GM12878 (cell line): ENCODE measurements at regions of chr9 and their contacts with region 1.

Region 1: GRCh38 chr9:130042833-130043653 is at the start of gene FNBP1:
- DNase-seq: no peak
- ATAC-seq: peak; percentile 53
- H3K4me3 ChIP-seq: peak within 1 kb of the TSS; percentile 95
- H3K27ac ChIP-seq: peak within 1 kb of the TSS; percentile 83
- H3K4me1 ChIP-seq: peaks cover 24% of the 10 kb centered on the region
- H3K27me3 ChIP-seq: no peaks in the 10 kb centered on the region
- CTCF ChIP-seq: no peak
- EP300 ChIP-seq: no peak
- POLR2A ChIP-seq: peak; percentile 92
- RAD21 ChIP-seq: no peak
- polyA plus RNA-seq, gene FNBP1: 64.5 to 80.5 TPM

Region 2: GRCh38 chr9:129932303-129933151 is 110.5 kb before region 1 on chr9:
- CTCF ChIA-PET with region 1: no interaction called
- POLR2A ChIA-PET with region 1: interaction called, 5 read pairs
- RAD21 ChIA-PET with region 1: interaction called, 23 read pairs
- SMC1A ChIA-PET with region 1: interaction called, 8 read pairs
- in situ Hi-C with region 1: no loop called
- intact Hi-C with region 1: no loop called
- DNase-seq: peak; percentile 47
- ATAC-seq: peak; percentile 52
- H3K4me3 ChIP-seq: no peak overlapping the region
- H3K27ac ChIP-seq: peak overlapping the region; percentile 84
- H3K4me1 ChIP-seq: peaks cover 46% of the 10 kb centered on the region
- H3K27me3 ChIP-seq: no peaks in the 10 kb centered on the region
- CTCF ChIP-seq: no peak
- EP300 ChIP-seq: 0 out of 4 replicates have a peak, but pooled peaks of 1 of the 2 experiments have one; percentile 18
- POLR2A ChIP-seq: no peak
- RAD21 ChIP-seq: no peak

Region 3: GRCh38 chr9:129988607-129989361 is 54.3 kb before region 1 on chr9:
- CTCF ChIA-PET with region 1: interaction called, 5 read pairs
- POLR2A ChIA-PET with region 1: interaction called, 247 read pairs
- RAD21 ChIA-PET with region 1: interaction called, 254 read pairs
- SMC1A ChIA-PET with region 1: interaction called, 763 read pairs
- in situ Hi-C with region 1: no loop called
- intact Hi-C with region 1: loop called (anchors 2 kb)
- DNase-seq: peak; percentile 99
- ATAC-seq: peak; percentile 65
- H3K4me3 ChIP-seq: peak overlapping the region; percentile 33
- H3K27ac ChIP-seq: peak overlapping the region; percentile 100
- H3K4me1 ChIP-seq: peaks cover 62% of the 10 kb centered on the region
- H3K27me3 ChIP-seq: no peaks in the 10 kb centered on the region
- CTCF ChIP-seq: no peak
- EP300 ChIP-seq: peak; percentile 74 to 96; a peak in 3 of 4 replicates
- POLR2A ChIP-seq: peak; percentile 70
- RAD21 ChIP-seq: peak; percentile 8; the same call in 1 of the 2 replicates

Region 4: DNA sequence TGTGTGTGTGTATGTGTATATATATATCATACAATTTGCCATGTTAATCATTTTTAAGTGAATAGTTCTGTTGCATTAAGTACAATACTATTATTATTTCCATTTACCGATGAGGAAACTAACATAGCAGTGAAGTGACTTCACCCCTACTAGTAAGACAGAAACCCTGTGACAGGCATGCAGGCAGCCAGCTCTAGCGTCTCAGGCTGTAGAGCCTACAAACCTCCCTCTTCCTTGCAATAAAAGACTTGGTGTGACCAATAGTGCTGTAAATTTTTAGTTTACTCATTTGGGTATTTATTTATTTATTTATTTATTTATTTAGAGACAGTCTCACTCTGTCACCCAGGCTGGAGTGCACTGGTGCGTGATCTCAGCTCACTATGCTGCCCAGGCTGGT is 24.8 kb before region 1 on chr9:
- CTCF ChIA-PET with region 1: interaction called, 4 read pairs
- POLR2A ChIA-PET with region 1: interaction called, 220 read pairs
- RAD21 ChIA-PET with region 1: interaction called, 160 read pairs
- SMC1A ChIA-PET with region 1: interaction called, 73 read pairs
- in situ Hi-C with region 1: no loop called
- intact Hi-C with region 1: no loop called
- DNase-seq: no peak
- ATAC-seq: peak; percentile 26
- H3K4me3 ChIP-seq: no peak overlapping the region
- H3K27ac ChIP-seq: peak overlapping the region; percentile 83
- H3K4me1 ChIP-seq: peaks cover 88% of the 10 kb centered on the region
- H3K27me3 ChIP-seq: no peaks in the 10 kb centered on the region
- CTCF ChIP-seq: no peak
- EP300 ChIP-seq: no peak
- POLR2A ChIP-seq: no peak
- RAD21 ChIP-seq: no peak

Region 5: GRCh38 chr9:130029223-130029973 is 13.6 kb before region 1 on chr9:
- CTCF ChIA-PET with region 1: interaction called, 20 read pairs
- POLR2A ChIA-PET with region 1: interaction called, 220 read pairs
- RAD21 ChIA-PET with region 1: interaction called, 160 read pairs
- SMC1A ChIA-PET with region 1: interaction called, 42 read pairs
- in situ Hi-C with region 1: no loop called
- intact Hi-C with region 1: no loop called
- DNase-seq: no peak
- ATAC-seq: peak; percentile 12
- H3K4me3 ChIP-seq: peak overlapping the region; percentile 46
- H3K27ac ChIP-seq: peak overlapping the region; percentile 83
- H3K4me1 ChIP-seq: peaks cover 85% of the 10 kb centered on the region
- H3K27me3 ChIP-seq: no peaks in the 10 kb centered on the region
- CTCF ChIP-seq: no peak
- EP300 ChIP-seq: peak; percentile 42 to 45; a peak in 2 of 4 replicates
- POLR2A ChIP-seq: no peak
- RAD21 ChIP-seq: no peak

Region 6: GRCh38 chr9:130069048-130069447 is 26.0 kb after region 1 on chr9:
- CTCF ChIA-PET with region 1: no interaction called
- POLR2A ChIA-PET with region 1: interaction called, 11 read pairs
- RAD21 ChIA-PET with region 1: interaction called, 5 read pairs
- SMC1A ChIA-PET with region 1: interaction called, 6 read pairs
- in situ Hi-C with region 1: no loop called
- intact Hi-C with region 1: no loop called
- DNase-seq: no peak
- ATAC-seq: no peak
- H3K4me3 ChIP-seq: no peak overlapping the region
- H3K27ac ChIP-seq: peak overlapping the region; percentile 20; the same call in 1 of the 2 replicates
- H3K4me1 ChIP-seq: peaks cover 18% of the 10 kb centered on the region
- H3K27me3 ChIP-seq: no peaks in the 10 kb centered on the region
- CTCF ChIP-seq: no peak
- EP300 ChIP-seq: no peak
- POLR2A ChIP-seq: no peak
- RAD21 ChIP-seq: no peak

Region 7: DNA sequence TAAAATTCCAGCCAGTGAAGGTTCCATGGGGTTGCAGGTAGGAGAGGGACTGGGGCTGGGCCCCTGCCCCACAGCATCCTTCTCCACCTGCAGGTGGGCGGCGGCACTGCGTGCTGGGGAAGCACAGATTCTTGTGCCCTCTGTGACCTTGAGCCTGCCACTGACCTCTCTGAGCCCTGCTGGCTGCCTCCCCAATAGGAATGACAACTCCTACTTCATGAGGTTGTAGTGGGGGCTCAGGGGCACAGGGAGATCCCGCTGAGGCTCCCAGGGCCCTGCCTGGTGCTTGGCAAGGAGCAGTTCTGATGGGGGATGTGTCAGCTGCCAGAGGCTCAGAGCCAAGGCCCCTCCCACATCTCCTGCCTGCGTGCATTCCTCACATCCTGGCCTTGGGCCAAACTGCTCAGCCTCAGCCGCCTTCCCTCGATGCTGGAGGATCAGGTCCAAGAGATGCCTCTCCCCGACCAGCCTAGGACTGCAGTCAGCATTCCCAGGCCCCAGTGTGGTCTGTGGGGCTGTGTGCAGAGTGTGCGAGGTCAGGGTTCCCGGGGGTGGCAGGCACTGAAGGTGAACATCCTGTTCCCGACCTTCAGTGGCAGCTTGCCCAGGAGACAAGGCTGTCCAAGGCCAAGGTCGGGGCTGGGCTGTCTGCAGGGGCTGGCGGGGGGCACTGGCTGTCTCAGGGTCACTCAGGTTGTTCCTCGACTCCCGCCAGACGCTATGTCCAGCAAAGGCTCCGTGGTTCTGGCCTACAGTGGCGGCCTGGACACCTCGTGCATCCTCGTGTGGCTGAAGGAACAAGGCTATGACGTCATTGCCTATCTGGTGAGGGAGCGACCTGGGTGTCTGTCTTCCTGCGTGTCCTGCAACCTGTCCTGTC is 408.7 kb after region 1 on chr9:
- CTCF ChIA-PET with region 1: no interaction called
- POLR2A ChIA-PET with region 1: no interaction called
- RAD21 ChIA-PET with region 1: no interaction called
- SMC1A ChIA-PET with region 1: no interaction called
- in situ Hi-C with region 1: no loop called
- intact Hi-C with region 1: no loop called
- DNase-seq: no peak
- ATAC-seq: peak; percentile 52
- H3K4me3 ChIP-seq: no peak overlapping the region
- H3K27ac ChIP-seq: no peak overlapping the region
- H3K4me1 ChIP-seq: no peaks in the 10 kb centered on the region
- H3K27me3 ChIP-seq: no peaks in the 10 kb centered on the region
- CTCF ChIP-seq: peak; percentile 8 to 44 (median 29); a peak in 1 of 6 replicates
- EP300 ChIP-seq: no peak
- POLR2A ChIP-seq: no peak
- RAD21 ChIP-seq: no peak

Region 8: GRCh38 chr9:131709771-131710454 is 1666.9 kb after region 1 on chr9:
- CTCF ChIA-PET with region 1: no interaction called
- POLR2A ChIA-PET with region 1: no interaction called
- RAD21 ChIA-PET with region 1: no interaction called
- SMC1A ChIA-PET with region 1: no interaction called
- in situ Hi-C with region 1: loop called (anchors 25 kb)
- intact Hi-C with region 1: no loop called
- DNase-seq: peak; percentile 77
- ATAC-seq: peak; percentile 76
- H3K4me3 ChIP-seq: peak overlapping the region; percentile 57
- H3K27ac ChIP-seq: peak overlapping the region; percentile 83
- H3K4me1 ChIP-seq: peaks cover 60% of the 10 kb centered on the region
- H3K27me3 ChIP-seq: no peaks in the 10 kb centered on the region
- CTCF ChIP-seq: 0 out of 6 replicates have a peak, but pooled peaks of 1 of the 3 experiments have one; percentile 8
- EP300 ChIP-seq: peak in 1 of 2 experiments; percentile 82; a peak in 3 of 4 replicates
- POLR2A ChIP-seq: no peak
- RAD21 ChIP-seq: no peak